ENCODE measurements at regions of chr20 and their contacts with region 1.

Region 1: DNA sequence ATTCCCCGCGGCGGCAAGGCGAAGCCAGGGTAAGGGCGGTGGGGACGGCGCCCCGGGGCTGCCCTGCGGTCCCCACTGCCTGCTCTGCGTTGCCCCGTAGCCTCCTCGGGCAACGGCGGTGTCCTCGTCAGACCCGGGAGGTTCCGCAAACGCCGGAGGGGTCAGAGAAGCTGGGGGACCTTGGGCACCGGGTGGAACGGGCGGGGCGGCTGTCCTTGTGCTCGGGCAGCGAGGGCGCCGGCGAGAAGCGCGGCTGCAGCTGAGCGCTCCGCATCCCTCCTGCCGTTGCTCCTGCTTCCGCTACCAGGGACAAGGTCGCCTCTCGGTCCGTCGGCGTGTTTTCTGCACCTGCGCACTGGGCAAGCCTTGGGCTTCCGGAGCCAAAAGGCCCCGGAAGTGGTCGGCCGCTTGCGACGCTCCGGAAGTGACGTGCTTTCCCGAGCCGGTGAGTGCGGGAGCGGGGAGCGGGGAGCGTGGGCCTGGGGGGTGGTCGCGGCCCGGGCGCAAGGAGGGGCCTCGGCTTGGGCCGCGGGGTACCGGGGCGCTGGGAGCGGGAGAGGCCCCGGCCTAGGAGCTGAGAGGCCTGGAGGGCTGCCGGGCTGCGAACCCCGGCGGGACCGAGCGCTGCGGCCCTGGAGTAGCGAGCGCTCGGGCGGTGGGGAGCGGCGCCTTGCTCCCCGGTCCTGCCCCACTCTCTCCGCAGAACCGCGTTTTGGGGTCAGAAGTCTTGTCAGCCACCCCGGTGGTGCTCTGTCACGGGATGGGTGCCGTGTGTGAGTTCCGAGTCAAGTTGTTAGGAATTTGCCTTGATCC is at the start of gene MTG2:
- DNase-seq: peak; percentile 100
- H3K27ac ChIP-seq: peak within 1 kb of the TSS; percentile 91
- CTCF ChIP-seq: no peak

Region 2: DNA sequence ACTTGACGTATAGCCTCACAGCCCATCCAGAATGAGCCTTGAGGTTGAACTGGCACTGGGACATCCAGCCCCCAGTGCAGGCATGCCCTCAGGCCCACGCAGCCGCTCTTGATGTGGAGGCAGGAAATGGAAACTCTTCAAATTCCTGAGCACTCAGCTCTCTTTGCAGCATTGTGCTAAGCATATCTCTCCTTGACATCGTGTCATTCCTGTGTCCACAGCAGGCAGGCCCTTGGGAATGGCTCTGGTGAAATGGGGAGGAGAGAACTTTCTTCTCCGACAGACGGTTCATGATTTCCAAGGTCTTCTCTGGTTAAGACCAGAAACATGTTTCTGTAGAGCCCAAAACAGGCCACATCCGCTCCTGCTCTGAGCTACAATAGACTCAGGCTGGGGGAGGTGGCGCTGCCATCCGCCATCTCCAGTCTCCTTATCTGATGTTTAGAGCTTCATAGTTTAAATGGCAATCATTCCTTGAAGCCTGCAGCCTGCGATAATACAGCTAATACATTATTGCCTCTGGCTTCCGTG is 682.0 kb before region 1 on chr20:
- CTCF ChIA-PET with region 1: no interaction called
- POLR2A ChIA-PET with region 1: no interaction called
- DNase-seq: no peak
- H3K27ac ChIP-seq: no peak overlapping the region
- CTCF ChIP-seq: no peak

Region 3: DNA sequence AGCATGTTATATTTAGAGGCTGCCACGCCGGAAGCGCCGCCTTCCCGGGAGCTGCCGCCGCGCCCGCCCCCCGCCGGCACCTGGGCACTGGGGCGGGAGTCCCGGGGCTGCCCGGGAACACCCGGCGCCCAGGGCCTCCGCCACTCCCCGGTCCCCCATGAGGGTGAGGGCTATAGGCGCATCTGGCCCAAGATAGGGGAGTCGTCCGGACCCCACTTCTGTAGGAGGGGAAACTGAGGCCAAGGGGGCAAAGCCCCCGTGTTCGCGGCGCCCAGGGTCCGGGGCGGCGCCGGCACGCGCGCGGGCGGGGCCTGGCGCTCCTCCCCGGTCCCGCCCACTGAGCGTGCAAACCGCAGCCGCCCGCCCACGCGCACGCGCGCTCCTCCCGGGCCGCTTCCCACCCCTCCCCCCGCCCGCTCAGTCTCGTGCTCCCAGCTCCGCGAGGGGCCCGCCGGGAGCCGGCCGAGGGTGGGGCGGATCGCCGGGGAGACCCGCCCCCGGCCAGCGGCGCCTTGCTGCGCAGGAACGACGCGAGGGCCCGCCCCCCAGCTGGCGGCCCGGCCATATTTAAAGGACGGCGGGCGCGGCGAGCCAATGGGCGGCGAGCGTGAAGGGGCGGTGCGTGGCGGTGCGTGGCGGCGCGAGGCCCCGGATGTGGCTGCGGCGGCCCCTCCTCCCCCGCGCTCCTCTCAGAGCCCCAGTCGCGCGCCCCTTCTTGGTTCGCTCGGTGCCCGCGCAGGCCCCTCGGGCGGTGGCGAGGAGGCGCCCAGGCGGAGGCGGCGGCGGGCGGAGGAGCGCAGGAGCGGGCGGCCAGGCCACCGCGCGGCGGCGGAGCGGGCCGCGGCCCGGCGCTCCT is 60.8 kb before region 1 on chr20 and contains the start of gene LSM14B:
- CTCF ChIA-PET with region 1: no interaction called
- POLR2A ChIA-PET with region 1: no interaction called
- DNase-seq: peak; percentile 100
- H3K27ac ChIP-seq: peak within 1 kb of the TSS; percentile 98
- CTCF ChIP-seq: no peak

Region 4: GRCh38 chr20:62203378-62204030 is 20.7 kb after region 1 on chr20:
- CTCF ChIA-PET with region 1: interaction called, 3 read pairs
- POLR2A ChIA-PET with region 1: interaction called, 13 read pairs
- DNase-seq: no peak
- H3K27ac ChIP-seq: peak overlapping the region; percentile 61
- CTCF ChIP-seq: no peak